Caco-2 (cell line): ENCODE measurements at regions of chr7 and their contacts with region 1.

Region 1: GRCh38 chr7:21253740-21254687 is 173.9 kb upstream of the SP4 start:
- DNase-seq: peak; percentile 72 to 79
- H3K4me3 ChIP-seq: no peak overlapping the region
- H3K4me3 Mint-ChIP-seq: peak overlapping the region; percentile 20
- H3K27ac Mint-ChIP-seq: no peak overlapping the region
- H3K4me1 ChIP-seq: peaks cover 12% of the 10 kb centered on the region; the same call in 1 of the 2 replicates
- H3K4me1 Mint-ChIP-seq: no peaks in the 10 kb centered on the region
- H3K27me3 ChIP-seq: no peaks in the 10 kb centered on the region
- H3K27me3 Mint-ChIP-seq: no peaks in the 10 kb centered on the region
- CTCF ChIP-seq: peak; percentile 63 to 79

Region 2: GRCh38 chr7:20778063-20778721 is 475.8 kb before region 1 on chr7:
- CTCF ChIA-PET with region 1: interaction called, 3 read pairs
- POLR2A ChIA-PET with region 1: no interaction called
- intact Hi-C with region 1: loop called (anchors 1 kb)
- DNase-seq: peak; percentile 60 to 83
- H3K4me3 ChIP-seq: peak overlapping the region; percentile 45
- H3K4me3 Mint-ChIP-seq: peak overlapping the region; percentile 79
- H3K27ac Mint-ChIP-seq: peak overlapping the region; percentile 56
- H3K4me1 ChIP-seq: peaks cover 10% of the 10 kb centered on the region; the same call in 1 of the 2 replicates
- H3K4me1 Mint-ChIP-seq: peaks cover 27% of the 10 kb centered on the region
- H3K27me3 ChIP-seq: no peaks in the 10 kb centered on the region
- H3K27me3 Mint-ChIP-seq: no peaks in the 10 kb centered on the region
- CTCF ChIP-seq: peak; percentile 77 to 81

Region 3: GRCh38 chr7:20913853-20914252 is 340.2 kb before region 1 on chr7:
- CTCF ChIA-PET with region 1: no interaction called
- POLR2A ChIA-PET with region 1: no interaction called
- intact Hi-C with region 1: loop called (anchors 10 kb)
- DNase-seq: no peak
- H3K4me3 ChIP-seq: no peak overlapping the region
- H3K4me3 Mint-ChIP-seq: no peak overlapping the region
- H3K27ac Mint-ChIP-seq: no peak overlapping the region
- H3K4me1 ChIP-seq: no peaks in the 10 kb centered on the region
- H3K4me1 Mint-ChIP-seq: no peaks in the 10 kb centered on the region
- H3K27me3 ChIP-seq: no peaks in the 10 kb centered on the region
- H3K27me3 Mint-ChIP-seq: no peaks in the 10 kb centered on the region
- CTCF ChIP-seq: no peak

Region 4: DNA sequence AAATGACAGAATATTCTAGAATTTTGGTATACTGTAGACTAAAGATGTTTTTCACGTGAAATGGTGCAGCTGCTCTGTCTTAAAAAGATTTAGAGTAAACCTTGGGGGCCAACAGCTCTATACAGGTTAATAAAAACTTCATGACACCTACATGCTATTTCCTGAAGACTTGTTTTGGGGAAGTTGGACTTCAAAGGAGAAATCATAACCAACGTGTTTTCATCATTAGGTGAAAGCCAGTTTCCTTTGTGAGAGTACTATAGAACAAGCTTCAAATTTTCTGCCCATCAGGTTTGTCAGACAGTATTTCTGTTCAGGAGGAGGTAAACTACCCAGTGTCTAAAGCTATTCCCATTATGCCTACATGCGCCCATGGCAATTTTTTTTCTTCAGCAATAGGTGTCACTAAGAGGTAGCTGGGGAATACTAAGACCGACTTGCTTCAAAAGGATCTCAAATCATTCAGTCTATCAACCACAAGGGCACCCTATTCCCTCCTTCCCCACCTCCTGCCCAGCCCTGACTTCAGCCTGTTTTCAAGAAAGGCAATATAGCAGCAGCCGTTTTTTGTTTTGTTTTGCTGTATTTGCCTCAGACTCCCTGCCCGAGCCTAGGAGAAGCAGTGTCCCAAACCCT is 230.1 kb before region 1 on chr7:
- CTCF ChIA-PET with region 1: interaction called, 6 read pairs
- POLR2A ChIA-PET with region 1: no interaction called
- intact Hi-C with region 1: loop called (anchors 1 kb)
- DNase-seq: no peak
- H3K4me3 ChIP-seq: no peak overlapping the region
- H3K4me3 Mint-ChIP-seq: no peak overlapping the region
- H3K27ac Mint-ChIP-seq: no peak overlapping the region
- H3K4me1 ChIP-seq: no peaks in the 10 kb centered on the region
- H3K4me1 Mint-ChIP-seq: no peaks in the 10 kb centered on the region
- H3K27me3 ChIP-seq: no peaks in the 10 kb centered on the region
- H3K27me3 Mint-ChIP-seq: peaks cover 4% of the 10 kb centered on the region
- CTCF ChIP-seq: no peak

Region 5: DNA sequence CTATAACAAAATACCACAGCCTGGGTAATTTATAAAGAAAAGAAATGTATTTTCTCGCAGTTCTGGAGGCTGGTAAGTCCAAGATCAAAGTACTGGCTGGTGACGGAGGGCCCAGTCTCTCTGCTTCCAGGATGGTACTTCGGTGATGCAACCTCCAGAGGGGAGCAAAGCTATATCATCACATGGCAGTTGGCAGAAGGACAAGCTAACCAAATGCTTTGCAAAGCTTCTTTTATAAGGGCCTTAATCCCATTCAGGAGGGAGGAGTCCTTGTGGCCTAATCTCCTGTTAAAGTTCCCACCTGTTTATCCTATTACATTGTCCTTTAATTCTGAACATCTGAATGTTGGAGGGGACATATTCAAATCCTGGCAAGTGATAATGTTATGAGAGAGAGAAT is 39.8 kb after region 1 on chr7:
- CTCF ChIA-PET with region 1: no interaction called
- POLR2A ChIA-PET with region 1: no interaction called
- intact Hi-C with region 1: no loop called
- DNase-seq: no peak
- H3K4me3 ChIP-seq: no peak overlapping the region
- H3K4me3 Mint-ChIP-seq: no peak overlapping the region
- H3K27ac Mint-ChIP-seq: no peak overlapping the region
- H3K4me1 ChIP-seq: no peaks in the 10 kb centered on the region
- H3K4me1 Mint-ChIP-seq: no peaks in the 10 kb centered on the region
- H3K27me3 ChIP-seq: no peaks in the 10 kb centered on the region
- H3K27me3 Mint-ChIP-seq: peaks cover 3% of the 10 kb centered on the region
- CTCF ChIP-seq: no peak

Region 6: DNA sequence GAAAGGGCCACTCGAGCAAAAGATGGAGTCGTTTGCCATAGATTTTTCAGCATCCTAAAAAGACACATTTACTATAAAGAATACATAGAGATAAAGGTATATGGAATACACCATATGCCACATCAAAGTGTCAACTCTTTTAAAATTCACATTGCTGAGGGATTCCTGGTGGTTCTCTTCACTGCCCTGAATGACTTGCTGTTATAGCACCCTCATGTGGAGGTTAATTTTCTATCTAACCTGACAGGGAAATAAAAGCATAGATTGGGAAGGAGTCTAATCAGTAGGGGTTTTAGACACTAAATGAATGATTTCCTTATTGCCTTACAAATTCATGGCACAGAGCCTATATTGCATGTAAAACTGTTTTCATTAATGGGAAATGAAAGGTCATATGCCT is 314.7 kb after region 1 on chr7:
- CTCF ChIA-PET with region 1: interaction called, 3 read pairs
- POLR2A ChIA-PET with region 1: no interaction called
- intact Hi-C with region 1: loop called (anchors 1 kb)
- DNase-seq: peak in 1 of 2 experiments; percentile 32
- H3K4me3 ChIP-seq: no peak overlapping the region
- H3K4me3 Mint-ChIP-seq: no peak overlapping the region
- H3K27ac Mint-ChIP-seq: no peak overlapping the region
- H3K4me1 ChIP-seq: no peaks in the 10 kb centered on the region
- H3K4me1 Mint-ChIP-seq: no peaks in the 10 kb centered on the region
- H3K27me3 ChIP-seq: no peaks in the 10 kb centered on the region
- H3K27me3 Mint-ChIP-seq: no peaks in the 10 kb centered on the region
- CTCF ChIP-seq: peak; percentile 12 to 36

Region 7: DNA sequence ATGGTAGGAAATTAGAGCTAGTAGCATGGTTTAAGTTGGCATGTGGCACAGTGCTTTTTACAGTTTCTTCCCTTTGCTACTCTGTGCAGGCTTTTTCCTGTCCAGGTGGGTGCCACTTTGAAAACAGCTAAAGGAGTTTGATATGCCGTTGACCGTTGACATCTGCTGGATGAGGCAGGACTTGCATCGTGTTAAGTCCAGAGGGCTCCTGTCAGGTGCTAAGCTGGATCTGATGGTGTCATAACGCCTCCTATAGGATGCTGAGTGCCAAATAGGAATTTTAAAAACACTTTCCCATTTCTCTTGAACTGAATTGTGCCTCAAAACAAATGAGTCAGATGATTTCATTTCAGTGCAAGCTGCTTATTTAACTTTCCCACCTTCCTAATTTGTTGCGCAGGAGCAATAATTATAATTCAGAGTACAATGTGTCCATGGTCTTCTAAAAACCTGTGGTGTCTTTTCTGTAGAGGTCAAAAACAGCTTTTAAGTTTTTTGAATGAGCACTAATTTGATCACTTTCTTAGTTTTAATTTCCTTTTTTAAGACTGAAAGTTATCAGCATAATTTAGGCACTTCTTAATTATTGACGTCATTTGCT is 513.4 kb after region 1 on chr7:
- CTCF ChIA-PET with region 1: interaction called, 30 read pairs
- POLR2A ChIA-PET with region 1: no interaction called
- intact Hi-C with region 1: loop called (anchors 1 kb)
- DNase-seq: peak; percentile 83 to 91
- H3K4me3 ChIP-seq: no peak overlapping the region
- H3K4me3 Mint-ChIP-seq: no peak overlapping the region
- H3K27ac Mint-ChIP-seq: no peak overlapping the region
- H3K4me1 ChIP-seq: peaks cover 19% of the 10 kb centered on the region
- H3K4me1 Mint-ChIP-seq: peaks cover 24% of the 10 kb centered on the region
- H3K27me3 ChIP-seq: no peaks in the 10 kb centered on the region
- H3K27me3 Mint-ChIP-seq: no peaks in the 10 kb centered on the region
- CTCF ChIP-seq: peak; percentile 91 to 93